ENCODE measurements at regions of chr4 and their contacts with region 1.

Region 1: DNA sequence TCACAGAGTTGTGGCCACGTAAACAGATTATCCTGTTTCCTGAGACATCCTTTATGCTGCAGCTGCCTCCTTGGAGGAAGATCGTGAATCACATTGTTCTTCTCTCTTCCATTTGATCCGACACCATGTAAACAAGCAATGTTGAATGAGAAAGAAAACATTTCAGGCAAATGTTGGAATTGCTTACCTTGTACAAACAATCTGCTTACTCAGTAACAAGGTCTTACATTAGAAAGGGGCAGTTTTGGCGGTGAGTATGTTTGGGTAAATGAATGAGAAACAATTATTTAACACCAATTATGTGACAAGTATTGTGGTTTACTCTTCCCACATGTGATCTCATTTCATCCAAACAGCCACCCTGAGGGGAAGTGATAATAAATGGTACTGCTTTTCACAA is 637.8 kb downstream of the RAB28 start:
- DNase-seq: no peak
- ATAC-seq: no peak
- H3K4me3 ChIP-seq: no peak overlapping the region
- H3K27ac ChIP-seq: no peak overlapping the region
- H3K4me1 ChIP-seq: no peaks in the 10 kb centered on the region
- H3K27me3 ChIP-seq: peaks cover 0 to 7% of the 10 kb centered on the region in 2 donors
- CTCF ChIP-seq: no peak

Region 2: GRCh38 chr4:13553081-13553480 is 706.7 kb after region 1 on chr4:
- intact Hi-C with region 1: loop called in 1 of 2 experiments (anchors 5 kb)
- DNase-seq: no peak
- ATAC-seq: no peak
- H3K4me3 ChIP-seq: no peak overlapping the region
- H3K27ac ChIP-seq: no peak overlapping the region
- H3K4me1 ChIP-seq: peaks cover 0 to 7% of the 10 kb centered on the region in 2 donors
- H3K27me3 ChIP-seq: peaks cover 33 to 64% of the 10 kb centered on the region in 2 donors
- CTCF ChIP-seq: no peak

Measured in left lung (tissue), 14 donors.